ENCODE measurements at regions of chr7 and their contacts with region 1.

Region 1: DNA sequence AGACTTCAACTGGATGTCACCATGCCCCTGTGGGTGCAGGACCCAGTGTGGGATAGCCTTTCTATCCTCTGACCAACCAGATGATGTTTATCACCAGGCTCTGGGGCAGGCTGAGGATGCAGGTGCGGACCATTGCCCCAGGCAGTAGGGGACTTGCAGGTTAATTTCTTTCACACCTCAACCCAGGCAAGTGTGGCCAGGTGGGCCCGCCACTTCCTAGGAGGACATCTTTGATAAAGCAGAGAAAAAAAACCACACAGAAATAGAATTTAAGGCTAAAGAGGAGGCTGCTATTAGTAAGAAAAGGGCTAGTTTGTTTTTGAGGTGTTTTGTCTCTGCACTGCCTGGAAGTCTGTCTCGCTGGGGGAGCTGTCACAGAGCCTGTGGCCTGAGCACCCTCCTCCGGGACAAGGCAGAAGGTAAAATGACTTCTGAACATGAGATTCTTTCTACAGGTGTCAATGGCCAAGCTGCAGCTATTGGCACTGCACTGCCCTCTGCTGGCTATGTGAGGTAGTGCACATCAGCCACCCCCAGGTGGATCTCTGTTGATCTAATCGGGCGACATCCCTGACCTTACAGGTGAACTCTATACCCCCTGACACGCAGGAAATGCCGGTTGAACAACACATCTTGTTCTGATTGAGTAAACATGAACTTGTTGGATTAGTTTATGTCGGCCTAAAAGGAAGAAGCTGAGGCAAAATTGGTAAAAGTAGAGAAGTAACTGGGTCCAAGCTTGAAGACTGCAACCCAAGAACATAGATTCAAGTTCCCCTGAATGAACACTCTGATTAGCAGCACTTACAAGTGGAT is 21.0 kb downstream of the UPP1 start:
- DNase-seq: peak; percentile 53 to 95 (median 84)

Region 2: GRCh38 chr7:47945261-47946001 is 164.6 kb before region 1 on chr7:
- intact Hi-C with region 1: loop called (anchors 1 kb)
- DNase-seq: peak; percentile 36 to 94 (median 80)

Region 3: DNA sequence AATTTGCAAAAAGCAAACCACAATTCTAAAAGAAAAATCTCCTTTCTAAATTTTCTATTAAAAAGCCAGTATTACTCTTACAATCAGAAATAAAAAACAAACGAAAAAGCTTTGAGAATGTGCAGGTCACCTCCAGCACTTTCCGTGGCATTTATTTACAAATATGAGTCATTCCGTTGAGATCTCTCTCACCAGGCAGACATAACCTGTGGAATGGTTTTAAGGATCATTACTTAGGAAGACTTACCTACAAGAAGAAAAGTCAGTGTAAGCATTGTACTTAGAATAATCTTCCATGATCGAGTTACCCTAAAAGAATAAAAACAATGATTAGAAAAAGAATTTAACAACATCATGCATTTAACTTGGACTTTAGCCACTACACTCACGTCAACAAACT is 84.4 kb before region 1 on chr7:
- intact Hi-C with region 1: no loop called
- DNase-seq: no peak

Region 4: DNA sequence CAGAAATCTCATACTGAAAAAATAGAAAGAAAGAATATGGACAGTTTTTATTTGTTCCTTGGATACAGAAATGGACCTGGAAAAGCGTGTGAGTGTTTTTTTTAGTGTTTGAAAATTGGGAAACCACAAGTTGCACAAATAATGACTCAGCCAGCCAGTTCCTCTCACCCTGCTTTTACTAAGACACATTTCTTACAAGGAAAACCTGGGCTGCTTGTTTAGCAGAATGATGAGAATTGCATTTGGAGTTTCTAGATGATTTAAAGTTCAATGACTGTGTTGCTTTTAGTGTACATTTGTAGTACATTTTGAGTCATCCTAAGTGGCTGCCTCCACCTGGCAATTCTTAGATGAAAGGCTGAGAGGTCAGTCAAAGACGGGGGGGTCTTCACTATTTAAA is 279.9 kb after region 1 on chr7:
- intact Hi-C with region 1: no loop called
- DNase-seq: no peak

Measured in posterior cingulate gyrus (tissue), 11 donors.